ENCODE measurements at regions of chr21 and their contacts with region 1.

Region 1: GRCh38 chr21:23853796-23854379 is 1753.4 kb downstream of the MRPL39 start:
- DNase-seq: no peak
- H3K4me3 ChIP-seq: no peak overlapping the region
- H3K27ac ChIP-seq: no peak overlapping the region
- H3K4me1 ChIP-seq: no peaks in the 10 kb centered on the region
- H3K27me3 ChIP-seq: no peaks in the 10 kb centered on the region
- CTCF ChIP-seq: peak in 2 of 4 experiments; percentile 30 to 43
- EP300 ChIP-seq: no peak
- POLR2A ChIP-seq: no peak

Region 2: GRCh38 chr21:23900727-23901126 is 46.8 kb after region 1 on chr21:
- intact Hi-C with region 1: no loop called
- DNase-seq: no peak
- H3K4me3 ChIP-seq: no peak overlapping the region
- H3K27ac ChIP-seq: no peak overlapping the region
- H3K4me1 ChIP-seq: no peaks in the 10 kb centered on the region
- H3K27me3 ChIP-seq: no peaks in the 10 kb centered on the region
- CTCF ChIP-seq: no peak
- EP300 ChIP-seq: no peak
- POLR2A ChIP-seq: no peak

Region 3: GRCh38 chr21:24514081-24514733 is 660.3 kb after region 1 on chr21:
- intact Hi-C with region 1: loop called (anchors 10 kb)
- DNase-seq: no peak
- H3K4me3 ChIP-seq: no peak overlapping the region
- H3K27ac ChIP-seq: no peak overlapping the region
- H3K4me1 ChIP-seq: no peaks in the 10 kb centered on the region
- H3K27me3 ChIP-seq: no peaks in the 10 kb centered on the region
- CTCF ChIP-seq: no peak
- EP300 ChIP-seq: no peak
- POLR2A ChIP-seq: no peak